GM18951 (cell line): ENCODE measurements at regions of chr11 and their contacts with region 1.

Region 1: GRCh38 chr11:45105233-45105983 is 41.0 kb upstream of the PRDM11 start:
- POLR2A ChIP-seq: no peak

Region 2: GRCh38 chr11:44943118-44943517 is 162.3 kb before region 1 on chr11:
- in situ Hi-C with region 1: loop called (anchors 5 kb)
- POLR2A ChIP-seq: no peak